ENCODE measurements at regions of chr2 and their contacts with region 1.

Region 1: GRCh38 chr2:26846328-26847306 is 1.3 kb upstream of the DPYSL5 start:
- DNase-seq: peak; percentile 37
- H3K4me3 Mint-ChIP-seq: peak overlapping the region; percentile 42
- H3K27ac Mint-ChIP-seq: no peak overlapping the region
- H3K4me1 Mint-ChIP-seq: peaks cover 3% of the 10 kb centered on the region
- H3K27me3 Mint-ChIP-seq: peaks cover 53% of the 10 kb centered on the region

Region 2: GRCh38 chr2:26887151-26887550 is 40.5 kb after region 1 on chr2:
- intact Hi-C with region 1: no loop called
- DNase-seq: no peak
- H3K4me3 Mint-ChIP-seq: no peak overlapping the region
- H3K27ac Mint-ChIP-seq: no peak overlapping the region
- H3K4me1 Mint-ChIP-seq: no peaks in the 10 kb centered on the region
- H3K27me3 Mint-ChIP-seq: peaks cover 10% of the 10 kb centered on the region

Region 3: DNA sequence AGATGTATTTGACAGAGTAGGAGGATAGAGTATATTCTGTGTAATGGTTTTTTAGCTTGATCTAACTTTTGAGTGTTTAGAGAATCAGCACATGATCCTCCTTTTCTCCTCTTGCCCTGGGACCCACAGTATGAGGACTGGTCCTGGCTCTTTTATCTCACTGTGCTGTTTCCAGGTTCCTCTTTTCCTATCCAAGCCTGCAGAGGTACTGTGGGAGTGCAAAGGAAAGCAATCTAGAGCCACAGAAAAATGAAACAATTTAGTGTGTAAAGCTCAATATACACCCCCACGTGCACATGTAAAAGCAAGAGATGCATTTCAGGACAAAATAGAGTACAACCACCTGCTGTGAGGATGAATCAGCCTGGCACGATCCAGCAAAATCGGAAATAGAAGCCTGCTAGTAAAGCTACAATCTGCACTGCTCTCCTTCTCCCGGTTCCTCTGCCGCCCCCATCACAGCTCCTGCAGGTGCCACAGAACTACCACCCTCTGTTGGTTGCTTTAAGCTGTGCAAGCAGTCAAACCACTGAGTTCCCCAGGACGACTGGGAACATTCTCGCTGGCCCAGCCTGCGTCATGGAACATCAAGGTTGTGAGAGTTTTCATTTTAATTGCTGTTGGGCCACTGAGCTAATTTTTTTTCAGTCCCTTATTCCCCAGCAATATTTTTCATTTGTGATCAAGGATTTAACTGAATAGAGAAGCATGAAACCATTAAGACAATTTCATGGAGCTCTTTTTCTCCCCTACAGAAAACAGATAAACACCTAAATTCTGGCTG is 76.0 kb after region 1 on chr2:
- intact Hi-C with region 1: loop called (anchors 5 kb)
- DNase-seq: no peak
- H3K4me3 Mint-ChIP-seq: no peak overlapping the region
- H3K27ac Mint-ChIP-seq: no peak overlapping the region
- H3K4me1 Mint-ChIP-seq: peaks cover 6% of the 10 kb centered on the region
- H3K27me3 Mint-ChIP-seq: peaks cover 19% of the 10 kb centered on the region

Region 4: GRCh38 chr2:26942543-26943295 is 96.1 kb after region 1 on chr2:
- intact Hi-C with region 1: loop called (anchors 1 kb)
- DNase-seq: peak; percentile 44
- H3K4me3 Mint-ChIP-seq: no peak overlapping the region
- H3K27ac Mint-ChIP-seq: no peak overlapping the region
- H3K4me1 Mint-ChIP-seq: no peaks in the 10 kb centered on the region
- H3K27me3 Mint-ChIP-seq: peaks cover 8% of the 10 kb centered on the region

Region 5: DNA sequence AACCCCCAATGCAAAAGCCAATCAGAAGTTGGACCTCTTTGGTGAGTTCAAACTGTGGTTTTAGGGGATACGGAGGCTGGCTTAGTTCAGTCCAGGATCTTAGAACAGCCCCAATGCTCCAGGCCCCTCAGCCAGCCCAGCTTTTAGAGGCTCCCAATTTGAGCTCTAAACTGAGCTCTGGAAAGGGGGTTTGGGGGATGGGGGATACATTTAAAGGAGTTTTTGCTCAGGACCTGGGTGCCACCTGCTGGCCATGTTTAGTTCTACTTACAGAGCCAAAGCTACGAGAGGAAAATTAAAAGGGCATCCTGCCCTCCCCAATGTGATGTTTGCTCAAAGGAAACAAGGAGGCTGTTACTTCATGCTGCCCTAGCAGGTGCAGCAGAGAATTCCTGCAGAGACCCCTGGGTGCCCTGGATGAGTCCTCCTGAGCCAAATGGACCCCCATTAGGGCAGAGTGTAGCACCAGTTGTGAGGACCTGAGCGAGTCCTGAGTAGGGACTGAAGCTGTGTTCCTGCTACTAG is 170.2 kb after region 1 on chr2:
- intact Hi-C with region 1: loop called (anchors 5 kb)
- DNase-seq: peak; percentile 21
- H3K4me3 Mint-ChIP-seq: no peak overlapping the region
- H3K27ac Mint-ChIP-seq: no peak overlapping the region
- H3K4me1 Mint-ChIP-seq: peaks cover 4% of the 10 kb centered on the region
- H3K27me3 Mint-ChIP-seq: no peaks in the 10 kb centered on the region